Activated CD4-positive, alpha-beta T cell treated with anti-CD3 and anti-CD28 coated beads for 36 hours (primary cell): ENCODE measurements at regions of chr17 and their contacts with region 1.

Region 1: GRCh38 chr17:64506576-64507477 is at the start of gene CEP95:
- DNase-seq: peak; percentile 97
- ATAC-seq: peak; percentile 56
- H3K4me3 Mint-ChIP-seq: peak within 1 kb of the TSS; percentile 100
- H3K27ac Mint-ChIP-seq: peak within 1 kb of the TSS; percentile 100
- H3K4me1 Mint-ChIP-seq: peaks cover 48% of the 10 kb centered on the region
- H3K27me3 Mint-ChIP-seq: no peaks in the 10 kb centered on the region
- total RNA-seq, gene CEP95: 40.5 to 42.8 TPM

Region 2: DNA sequence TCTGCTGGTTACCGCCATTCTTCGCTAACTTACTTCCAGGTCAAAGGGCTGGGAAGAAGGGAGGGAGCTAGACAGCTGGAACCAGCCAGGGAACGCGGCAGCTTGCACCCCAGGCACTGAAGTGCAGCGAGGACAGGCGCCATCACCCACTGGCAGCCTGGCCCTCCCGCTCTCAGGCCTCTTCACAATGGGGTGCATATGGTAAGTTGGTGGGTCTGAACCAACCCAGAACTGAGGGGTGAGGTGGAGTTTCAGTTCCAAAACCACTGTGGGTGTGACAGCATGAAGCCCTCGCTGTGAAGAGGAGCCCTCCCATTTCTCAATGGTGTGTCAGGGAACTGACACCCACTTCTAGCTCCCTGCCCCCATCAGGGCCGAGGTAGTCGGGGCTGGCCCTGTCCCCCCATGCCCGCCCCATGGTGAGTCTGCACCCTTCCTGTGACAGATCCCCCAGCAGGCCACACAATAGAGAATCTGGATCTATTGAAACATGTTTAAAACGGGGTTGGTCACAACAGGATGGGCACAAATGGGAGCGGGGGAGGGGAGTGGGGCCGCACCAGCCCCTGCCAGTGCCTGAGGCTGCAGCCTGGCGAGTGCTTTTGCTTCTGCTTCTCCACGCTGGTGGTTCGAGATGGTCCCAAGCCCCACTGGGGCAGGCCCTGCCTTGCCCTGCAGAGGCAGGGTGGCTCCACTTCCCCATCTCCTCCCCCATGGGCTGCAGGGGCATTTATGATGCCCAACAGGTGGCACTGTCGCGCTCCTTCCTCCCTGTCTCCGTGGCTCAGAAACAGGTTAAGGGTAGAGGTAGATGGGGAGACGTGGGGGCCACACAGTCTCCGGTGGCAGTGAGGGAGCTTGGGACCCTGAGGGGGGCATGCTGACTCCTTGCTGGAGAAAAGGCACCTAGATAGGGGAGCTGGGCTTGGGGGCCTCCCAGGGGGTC is 809.2 kb before region 1 on chr17:
- CTCF ChIA-PET with region 1: no interaction called
- POLR2A ChIA-PET with region 1: no interaction called
- intact Hi-C with region 1: loop called in 1 of 2 experiments (anchors 2 kb)
- DNase-seq: peak; percentile 90
- ATAC-seq: peak; percentile 42
- H3K4me3 Mint-ChIP-seq: peak overlapping the region; percentile 79
- H3K27ac Mint-ChIP-seq: peak overlapping the region; percentile 88
- H3K4me1 Mint-ChIP-seq: peaks cover 64% of the 10 kb centered on the region
- H3K27me3 Mint-ChIP-seq: no peaks in the 10 kb centered on the region

Region 3: GRCh38 chr17:63827002-63827771 is 679.6 kb before region 1 on chr17 and contains the starts of genes FTSJ3 and PSMC5:
- CTCF ChIA-PET with region 1: no interaction called
- POLR2A ChIA-PET with region 1: no interaction called
- intact Hi-C with region 1: loop called in 1 of 2 experiments (anchors 1 kb)
- DNase-seq: peak; percentile 97
- ATAC-seq: peak; percentile 94
- H3K4me3 Mint-ChIP-seq: peak within 1 kb of the TSS; percentile 88
- H3K27ac Mint-ChIP-seq: peak within 1 kb of the TSS; percentile 99
- H3K4me1 Mint-ChIP-seq: peaks cover 72% of the 10 kb centered on the region
- H3K27me3 Mint-ChIP-seq: no peaks in the 10 kb centered on the region
- total RNA-seq, gene FTSJ3: 52.1 to 61.2 TPM
- total RNA-seq, gene PSMC5: 98.2 to 160 TPM

Region 4: GRCh38 chr17:64212122-64212521 is 294.7 kb before region 1 on chr17:
- CTCF ChIA-PET with region 1: no interaction called
- POLR2A ChIA-PET with region 1: no interaction called
- intact Hi-C with region 1: no loop called
- DNase-seq: no peak
- ATAC-seq: no peak
- H3K4me3 Mint-ChIP-seq: no peak overlapping the region
- H3K27ac Mint-ChIP-seq: no peak overlapping the region
- H3K4me1 Mint-ChIP-seq: peaks cover 3% of the 10 kb centered on the region
- H3K27me3 Mint-ChIP-seq: no peaks in the 10 kb centered on the region

Region 5: GRCh38 chr17:64437944-64438525 is 68.8 kb before region 1 on chr17:
- CTCF ChIA-PET with region 1: no interaction called
- POLR2A ChIA-PET with region 1: no interaction called
- intact Hi-C with region 1: no loop called
- DNase-seq: no peak
- ATAC-seq: no peak
- H3K4me3 Mint-ChIP-seq: no peak overlapping the region
- H3K27ac Mint-ChIP-seq: no peak overlapping the region
- H3K4me1 Mint-ChIP-seq: peaks cover 18% of the 10 kb centered on the region
- H3K27me3 Mint-ChIP-seq: no peaks in the 10 kb centered on the region

Region 6: DNA sequence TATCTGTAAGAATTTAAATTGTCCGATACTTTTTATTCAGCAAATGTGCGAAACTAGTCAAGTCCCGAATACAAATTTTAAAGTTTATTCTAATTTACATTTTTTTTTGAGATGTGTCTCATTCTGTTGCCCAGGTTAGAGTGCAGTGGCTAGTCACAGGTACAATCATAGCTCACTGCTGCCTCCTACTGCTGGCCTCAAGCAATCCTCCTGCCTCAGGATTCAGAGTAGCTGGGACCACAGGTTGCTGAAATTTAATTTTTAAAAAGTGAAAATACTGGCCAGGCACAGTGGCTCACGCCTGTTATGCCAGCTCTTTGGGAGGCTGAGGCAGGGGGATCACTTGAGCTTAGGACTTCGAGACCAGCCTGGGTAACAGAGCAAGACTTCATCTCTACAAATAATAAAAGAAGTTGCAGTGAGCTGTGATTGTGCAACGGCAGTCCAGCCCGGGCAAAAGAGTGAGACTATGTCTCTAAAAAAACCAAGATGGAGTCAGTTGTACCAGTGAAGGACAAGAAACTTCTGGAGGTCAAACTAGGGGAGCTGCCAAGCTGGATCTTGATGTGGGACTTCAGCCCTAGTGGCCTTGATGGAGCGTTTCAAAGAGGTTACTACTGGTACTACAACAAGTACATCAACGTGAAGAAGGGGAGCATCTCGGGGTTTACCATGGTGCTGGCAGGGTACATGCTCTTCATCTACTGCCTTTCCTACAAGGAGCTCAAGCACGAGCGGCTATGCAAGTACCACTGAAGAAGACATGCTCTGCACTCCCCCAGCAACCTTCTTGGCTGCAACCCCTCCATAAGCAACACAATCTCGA is 15.6 kb before region 1 on chr17:
- CTCF ChIA-PET with region 1: interaction called, 26 read pairs
- POLR2A ChIA-PET with region 1: interaction called, 111 read pairs
- intact Hi-C with region 1: no loop called
- DNase-seq: peak; percentile 78
- ATAC-seq: peak; percentile 84
- H3K4me3 Mint-ChIP-seq: no peak overlapping the region
- H3K27ac Mint-ChIP-seq: no peak overlapping the region
- H3K4me1 Mint-ChIP-seq: peaks cover 28% of the 10 kb centered on the region
- H3K27me3 Mint-ChIP-seq: no peaks in the 10 kb centered on the region

Region 7: DNA sequence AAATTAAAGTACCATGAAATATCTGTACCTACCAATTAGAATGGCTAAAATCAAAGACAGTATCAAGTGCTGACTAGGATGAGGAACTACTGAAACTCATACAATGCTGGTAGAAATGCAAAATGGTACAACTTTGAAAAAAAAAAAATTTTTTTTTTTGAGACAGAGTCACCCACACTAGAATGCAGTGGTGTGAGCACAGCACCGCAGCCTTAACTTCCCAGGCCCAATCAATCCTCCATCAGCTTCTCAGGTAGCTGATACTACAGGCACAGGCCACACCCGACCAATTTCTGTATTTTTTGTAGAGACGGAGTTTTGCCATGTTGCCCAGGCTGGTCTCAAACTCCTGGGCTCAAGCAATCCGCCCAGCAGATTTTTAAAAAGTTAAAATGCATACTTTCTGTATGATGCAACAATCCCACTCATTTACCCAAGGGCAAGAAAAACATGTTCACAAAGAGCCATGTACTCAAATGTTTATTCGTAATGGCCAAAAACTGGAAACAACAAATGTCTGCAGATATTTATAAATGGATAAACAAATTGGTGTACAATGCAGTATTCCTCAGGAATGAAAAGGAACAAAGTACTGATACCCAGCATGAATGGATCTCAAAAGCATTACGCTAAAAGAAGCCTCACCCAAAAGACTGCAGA is 146.6 kb after region 1 on chr17:
- CTCF ChIA-PET with region 1: interaction called, 8 read pairs
- POLR2A ChIA-PET with region 1: interaction called, 4 read pairs
- intact Hi-C with region 1: loop called in 1 of 2 experiments (anchors 1 kb)
- DNase-seq: no peak
- ATAC-seq: no peak
- H3K4me3 Mint-ChIP-seq: no peak overlapping the region
- H3K27ac Mint-ChIP-seq: peak overlapping the region; percentile 43
- H3K4me1 Mint-ChIP-seq: peaks cover 42% of the 10 kb centered on the region
- H3K27me3 Mint-ChIP-seq: no peaks in the 10 kb centered on the region

Region 8: GRCh38 chr17:64765191-64765958 is 258.5 kb after region 1 on chr17:
- CTCF ChIA-PET with region 1: no interaction called
- POLR2A ChIA-PET with region 1: no interaction called
- intact Hi-C with region 1: no loop called
- DNase-seq: no peak
- ATAC-seq: no peak
- H3K4me3 Mint-ChIP-seq: no peak overlapping the region
- H3K27ac Mint-ChIP-seq: no peak overlapping the region
- H3K4me1 Mint-ChIP-seq: no peaks in the 10 kb centered on the region
- H3K27me3 Mint-ChIP-seq: no peaks in the 10 kb centered on the region

Region 9: DNA sequence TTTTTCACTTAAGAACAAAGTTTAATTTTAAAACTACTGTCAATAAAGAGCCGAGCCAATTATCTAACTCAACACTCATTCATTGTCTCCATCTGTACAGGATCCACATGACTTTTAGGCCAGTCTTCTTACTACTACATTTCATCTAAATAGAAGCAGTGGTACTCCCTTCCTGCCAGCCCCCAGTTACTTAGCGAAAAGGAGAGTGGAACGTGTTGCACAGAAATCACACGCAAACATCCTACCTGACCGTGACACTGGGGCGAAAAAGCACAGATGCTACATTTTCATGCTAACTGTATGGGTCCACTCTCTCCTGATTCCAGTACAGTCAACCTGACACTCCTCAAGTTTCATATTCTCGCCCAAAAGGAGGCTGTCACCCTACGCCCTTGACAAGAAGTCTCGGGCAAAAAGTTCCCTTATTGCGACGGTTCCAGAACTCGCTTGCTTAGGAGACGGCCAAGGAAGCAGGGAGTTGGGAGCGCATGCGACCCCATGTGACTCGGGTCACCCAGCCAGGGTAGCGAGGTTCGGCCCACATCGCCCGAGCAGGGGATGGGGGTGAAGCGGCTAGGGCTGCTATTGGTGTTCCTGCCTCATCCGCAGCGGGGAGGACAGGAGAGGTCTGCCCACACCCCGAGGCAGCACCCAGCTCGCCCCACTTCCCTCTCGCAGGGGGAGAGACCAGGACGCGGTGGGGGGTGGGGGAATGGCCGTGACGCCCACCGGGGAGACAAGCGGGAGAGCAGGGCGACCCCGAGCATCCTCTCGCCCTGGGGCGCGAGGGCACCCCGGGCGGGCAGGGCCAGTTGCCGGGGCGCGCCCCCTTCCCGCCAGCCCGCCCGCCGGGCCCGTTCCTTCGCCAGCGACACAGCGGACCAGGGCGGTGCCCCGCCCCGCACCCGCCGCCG is 548.8 kb after region 1 on chr17:
- CTCF ChIA-PET with region 1: no interaction called
- POLR2A ChIA-PET with region 1: no interaction called
- intact Hi-C with region 1: loop called in 1 of 2 experiments (anchors 1 kb)
- DNase-seq: peak; percentile 76
- ATAC-seq: peak; percentile 55
- H3K4me3 Mint-ChIP-seq: peak overlapping the region; percentile 93
- H3K27ac Mint-ChIP-seq: peak overlapping the region; percentile 94
- H3K4me1 Mint-ChIP-seq: peaks cover 43% of the 10 kb centered on the region
- H3K27me3 Mint-ChIP-seq: no peaks in the 10 kb centered on the region